ENCODE measurements at regions of chr10 and their contacts with region 1.

Region 1: DNA sequence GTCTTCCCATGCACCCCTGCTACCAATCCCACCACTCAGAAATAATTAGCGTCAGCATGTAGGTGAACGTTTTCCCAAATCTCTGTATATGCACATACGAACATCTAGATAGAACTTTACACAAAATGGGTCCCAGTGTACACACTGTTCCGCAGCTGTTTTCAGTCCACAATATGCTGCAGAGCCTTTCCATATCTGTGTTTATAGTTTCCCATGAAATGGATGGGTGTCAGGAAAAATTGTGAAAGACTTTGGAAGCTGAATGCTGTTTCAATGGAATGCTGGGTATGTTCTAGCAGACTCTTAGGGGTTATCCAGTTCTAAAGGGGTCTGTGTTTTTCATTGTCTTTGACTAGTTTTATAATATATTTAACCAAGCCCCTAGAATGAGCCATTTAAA is 13.8 kb downstream of the GRK5 start:
- DNase-seq: no peak
- ATAC-seq: no peak
- H3K4me3 Mint-ChIP-seq: no peak overlapping the region
- H3K27ac Mint-ChIP-seq: no peak overlapping the region
- H3K4me1 Mint-ChIP-seq: peaks cover 27% of the 10 kb centered on the region
- H3K27me3 Mint-ChIP-seq: no peaks in the 10 kb centered on the region
- CTCF ChIP-seq: no peak

Region 2: GRCh38 chr10:119051775-119052174 is 169.4 kb before region 1 on chr10:
- CTCF ChIA-PET with region 1: no interaction called
- POLR2A ChIA-PET with region 1: no interaction called
- intact Hi-C with region 1: no loop called
- DNase-seq: no peak
- ATAC-seq: no peak
- H3K4me3 Mint-ChIP-seq: no peak overlapping the region
- H3K27ac Mint-ChIP-seq: no peak overlapping the region
- H3K4me1 Mint-ChIP-seq: peaks cover 13% of the 10 kb centered on the region
- H3K27me3 Mint-ChIP-seq: no peaks in the 10 kb centered on the region
- CTCF ChIP-seq: no peak

Region 3: DNA sequence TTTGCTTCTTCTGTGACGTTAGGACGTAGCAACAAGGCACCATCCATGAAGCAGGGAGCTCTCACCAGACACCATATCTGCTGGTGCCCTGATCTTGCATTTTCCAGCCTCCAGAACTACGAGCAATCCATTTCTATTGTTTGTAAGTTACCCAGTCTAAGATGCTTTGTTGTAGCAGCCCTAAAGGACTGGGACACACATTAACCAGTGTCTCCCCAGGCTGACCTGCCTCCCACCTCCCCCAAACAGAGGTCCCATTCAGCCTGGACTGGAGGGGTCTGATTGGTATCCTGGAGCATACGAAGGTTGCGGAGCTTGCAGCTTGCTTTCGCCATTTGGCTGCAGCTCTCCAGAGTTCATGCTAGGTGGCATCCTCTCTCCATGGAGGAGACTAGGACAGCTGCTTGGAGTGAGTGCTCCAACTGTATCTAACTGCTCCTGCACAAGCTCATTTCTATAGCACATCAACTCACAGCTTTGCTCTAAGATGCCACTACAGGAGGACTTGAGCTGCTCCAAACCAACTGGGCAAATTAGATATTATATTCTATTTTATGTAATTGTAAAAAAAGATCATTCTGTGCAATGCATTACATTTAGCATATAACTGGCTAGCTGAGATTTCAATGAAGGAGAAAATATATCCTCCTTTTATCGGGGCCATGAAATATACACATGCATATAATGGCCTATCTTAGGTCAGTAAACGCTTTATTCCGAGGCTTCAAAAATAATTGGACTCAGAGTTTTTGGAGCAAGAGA is 21.8 kb before region 1 on chr10:
- CTCF ChIA-PET with region 1: no interaction called
- POLR2A ChIA-PET with region 1: no interaction called
- intact Hi-C with region 1: no loop called
- DNase-seq: no peak
- ATAC-seq: peak; percentile 88
- H3K4me3 Mint-ChIP-seq: no peak overlapping the region
- H3K27ac Mint-ChIP-seq: no peak overlapping the region
- H3K4me1 Mint-ChIP-seq: peaks cover 3% of the 10 kb centered on the region
- H3K27me3 Mint-ChIP-seq: peaks cover 3% of the 10 kb centered on the region
- CTCF ChIP-seq: no peak

Region 4: DNA sequence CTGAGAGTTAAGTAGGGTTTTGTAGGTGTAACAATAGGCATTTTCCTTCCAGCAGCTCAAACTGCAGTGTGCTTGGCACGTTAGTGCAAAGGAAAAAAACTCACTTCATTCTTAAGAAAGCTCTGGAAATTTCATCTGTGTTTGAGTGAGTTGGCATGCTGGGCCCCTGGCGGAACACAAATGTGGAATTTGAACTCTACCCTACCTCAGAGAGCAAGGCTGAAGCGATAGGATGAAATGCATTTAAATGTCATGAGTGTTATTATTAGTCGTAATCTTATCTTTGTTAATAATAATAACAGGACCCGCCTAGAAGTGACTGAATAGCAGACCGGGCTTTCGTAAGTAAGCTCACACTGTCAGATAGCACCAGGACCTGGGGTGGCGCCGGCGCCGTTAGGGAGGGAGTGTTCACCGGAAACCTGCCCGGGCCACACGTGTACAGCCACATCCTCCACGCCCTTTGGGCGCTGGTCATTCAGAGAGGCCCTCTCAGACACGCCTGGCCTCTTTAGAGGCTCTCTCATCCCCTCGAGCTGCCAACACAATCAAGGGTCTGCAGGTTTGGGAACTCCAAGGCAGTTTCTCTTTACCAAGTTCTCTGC is 49.7 kb after region 1 on chr10:
- CTCF ChIA-PET with region 1: no interaction called
- POLR2A ChIA-PET with region 1: interaction called, 4 read pairs
- intact Hi-C with region 1: loop called (anchors 2 kb)
- DNase-seq: peak; percentile 45
- ATAC-seq: peak; percentile 49
- H3K4me3 Mint-ChIP-seq: peak overlapping the region; percentile 69
- H3K27ac Mint-ChIP-seq: peak overlapping the region; percentile 96
- H3K4me1 Mint-ChIP-seq: peaks cover 87% of the 10 kb centered on the region
- H3K27me3 Mint-ChIP-seq: no peaks in the 10 kb centered on the region
- CTCF ChIP-seq: no peak

Region 5: DNA sequence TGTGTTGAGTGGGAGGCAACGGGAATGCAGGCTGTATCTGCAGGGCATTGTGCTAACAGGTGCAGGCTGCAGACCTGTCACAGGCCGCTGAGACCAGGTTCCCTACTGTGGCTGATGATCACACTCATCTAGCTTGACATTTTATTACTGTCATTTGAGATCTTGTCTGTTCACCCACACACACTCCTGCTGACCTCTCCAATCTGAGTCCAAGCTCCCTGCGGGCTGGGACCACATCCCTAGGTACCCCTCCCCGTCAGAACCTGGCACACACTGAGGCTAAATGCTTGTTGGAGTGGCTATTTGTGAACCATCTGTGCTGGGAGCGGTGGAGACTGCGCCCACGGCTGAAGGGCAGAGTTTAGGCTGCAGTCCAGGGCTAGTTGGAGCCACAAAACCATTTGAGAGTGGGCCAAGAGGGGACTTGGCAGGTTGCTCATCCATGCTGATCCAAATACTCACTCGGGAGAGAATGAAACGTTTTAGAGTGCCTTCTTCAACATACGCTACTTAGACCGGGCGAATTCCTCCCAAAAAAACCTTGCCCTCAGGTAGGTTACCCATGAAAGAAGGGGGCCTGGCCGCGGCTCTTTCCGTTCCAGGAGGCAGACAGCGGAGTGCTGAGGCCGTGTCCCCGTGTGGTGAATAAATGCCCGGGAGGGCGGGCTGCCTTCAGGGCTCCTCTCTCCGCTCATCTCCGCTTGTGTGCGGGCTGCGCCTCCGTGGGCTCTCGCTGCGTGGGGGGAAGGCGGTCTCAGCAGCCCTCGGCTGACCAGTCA is 156.9 kb after region 1 on chr10:
- CTCF ChIA-PET with region 1: no interaction called
- POLR2A ChIA-PET with region 1: no interaction called
- intact Hi-C with region 1: no loop called
- DNase-seq: no peak
- ATAC-seq: no peak
- H3K4me3 Mint-ChIP-seq: no peak overlapping the region
- H3K27ac Mint-ChIP-seq: no peak overlapping the region
- H3K4me1 Mint-ChIP-seq: peaks cover 43% of the 10 kb centered on the region
- H3K27me3 Mint-ChIP-seq: no peaks in the 10 kb centered on the region
- CTCF ChIP-seq: no peak